HCT116 (cell line): ENCODE measurements at regions of chr5 and their contacts with region 1.

Region 1: GRCh38 chr5:179795863-179796833 is 2.4 kb downstream of the LTC4S start:
- DNase-seq: no peak
- ATAC-seq: peak; percentile 78
- H3K4me3 ChIP-seq: peak overlapping the region; percentile 65 to 84
- H3K27ac ChIP-seq: peak overlapping the region; percentile 99
- H3K4me1 ChIP-seq: peaks cover 9 to 22% of the 10 kb centered on the region in 2 experiments; a peak in 3 of 4 replicates
- H3K27me3 ChIP-seq: no peaks in the 10 kb centered on the region
- CTCF ChIP-seq: peak in 2 of 3 experiments; percentile 51 to 53; a peak in 4 of 6 replicates
- POLR2A ChIP-seq: peak; percentile 76
- RAD21 ChIP-seq: no peak

Region 2: DNA sequence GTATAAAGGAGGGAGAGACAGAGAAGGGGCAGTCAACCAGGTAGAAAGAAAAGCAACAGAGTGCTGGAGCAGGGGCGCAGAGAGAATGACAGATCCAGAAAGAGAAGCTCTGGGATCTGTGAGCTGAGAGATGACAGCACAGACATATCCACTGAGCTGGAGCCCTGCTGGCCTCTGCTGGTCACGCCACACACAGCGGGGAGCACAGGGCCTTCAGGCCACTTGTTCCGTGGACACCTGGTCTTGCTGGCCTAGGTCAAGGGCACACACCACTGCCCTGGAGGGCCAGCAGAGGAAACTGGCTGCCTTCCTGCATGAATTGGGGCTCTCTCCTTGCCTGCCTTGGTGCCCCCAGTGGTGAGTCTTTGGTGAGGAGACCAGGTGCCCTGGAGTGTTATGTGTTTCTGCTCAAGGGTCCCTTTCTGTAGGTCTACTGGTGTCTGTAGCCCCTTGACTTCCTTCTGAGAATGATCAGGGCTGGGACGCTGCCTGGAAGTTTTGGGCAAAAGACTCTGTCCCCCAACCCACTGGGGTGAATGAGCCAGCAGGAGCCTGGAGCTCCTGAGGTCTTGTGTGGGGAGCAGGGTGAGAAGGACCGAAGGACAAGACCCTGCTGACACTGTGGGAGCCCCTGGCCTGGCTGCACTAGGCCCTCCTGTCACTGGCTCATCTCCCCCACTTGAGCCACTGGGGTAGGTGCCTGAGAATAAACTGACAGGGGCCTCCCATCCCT is 391.7 kb before region 1 on chr5:
- CTCF ChIA-PET with region 1: no interaction called
- POLR2A ChIA-PET with region 1: no interaction called
- RAD21 ChIA-PET with region 1: no interaction called
- intact Hi-C with region 1: no loop called
- DNase-seq: no peak
- ATAC-seq: peak; percentile 72
- H3K4me3 ChIP-seq: no peak overlapping the region
- H3K27ac ChIP-seq: no peak overlapping the region
- H3K4me1 ChIP-seq: no peaks in the 10 kb centered on the region
- H3K27me3 ChIP-seq: no peaks in the 10 kb centered on the region
- CTCF ChIP-seq: peak; percentile 32 to 39 (median 39); a peak in 5 of 6 replicates
- POLR2A ChIP-seq: no peak
- RAD21 ChIP-seq: peak; percentile 66

Region 3: DNA sequence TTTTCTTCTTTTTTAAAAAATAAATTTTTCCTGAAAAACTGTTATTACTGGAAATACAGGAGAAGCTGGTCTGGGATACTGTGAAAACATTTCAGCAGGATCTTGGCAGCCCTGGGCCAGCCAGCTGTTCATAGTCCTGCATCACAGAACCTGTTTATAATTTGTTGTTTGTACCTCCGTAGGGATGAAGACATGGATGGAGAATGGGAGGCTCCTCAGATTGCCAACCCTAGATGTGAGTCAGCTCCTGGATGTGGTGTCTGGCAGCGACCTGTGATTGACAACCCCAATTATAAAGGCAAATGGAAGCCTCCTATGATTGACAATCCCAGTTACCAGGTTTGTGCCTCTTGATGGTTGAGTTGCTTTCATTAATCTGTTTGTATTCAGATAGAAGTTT is 75.9 kb before region 1 on chr5:
- CTCF ChIA-PET with region 1: no interaction called
- POLR2A ChIA-PET with region 1: no interaction called
- RAD21 ChIA-PET with region 1: no interaction called
- intact Hi-C with region 1: no loop called
- DNase-seq: no peak
- ATAC-seq: no peak
- H3K4me3 ChIP-seq: no peak overlapping the region
- H3K27ac ChIP-seq: no peak overlapping the region
- H3K4me1 ChIP-seq: no peaks in the 10 kb centered on the region
- H3K27me3 ChIP-seq: no peaks in the 10 kb centered on the region
- CTCF ChIP-seq: no peak
- POLR2A ChIP-seq: no peak
- RAD21 ChIP-seq: no peak

Region 4: DNA sequence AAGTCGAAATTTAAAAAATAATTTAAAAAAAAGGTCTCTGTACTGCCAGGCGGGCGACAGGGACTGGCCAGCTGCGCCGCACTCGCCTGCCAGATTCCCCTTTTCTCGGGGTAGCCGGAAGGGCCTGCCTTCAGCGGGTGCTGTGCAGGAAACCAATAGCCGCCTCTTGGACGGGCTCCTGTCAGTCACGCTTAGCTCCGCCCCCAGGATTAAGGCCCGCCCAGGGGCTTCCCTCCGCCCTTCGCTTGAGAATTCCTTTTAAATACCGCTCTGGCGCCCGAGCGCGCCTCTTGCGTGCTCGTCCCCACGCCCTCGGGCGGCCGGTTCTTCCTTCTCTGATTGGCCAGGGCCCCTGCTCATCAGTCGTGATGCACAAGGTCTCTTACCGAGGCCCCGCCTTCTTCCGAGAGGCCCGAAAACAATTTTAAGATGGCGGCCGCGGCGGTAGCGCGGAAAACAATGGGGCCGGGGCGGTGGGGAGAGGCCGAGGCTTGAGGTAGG is 63.7 kb before region 1 on chr5 and contains the start of gene MAML1:
- CTCF ChIA-PET with region 1: interaction called, 3 read pairs
- POLR2A ChIA-PET with region 1: no interaction called
- RAD21 ChIA-PET with region 1: no interaction called
- intact Hi-C with region 1: loop called (anchors 2 kb)
- DNase-seq: peak; percentile 99
- ATAC-seq: peak; percentile 92
- H3K4me3 ChIP-seq: peak within 1 kb of the TSS; percentile 72 to 85
- H3K27ac ChIP-seq: peak within 1 kb of the TSS; percentile 93
- H3K4me1 ChIP-seq: peaks cover 5 to 30% of the 10 kb centered on the region in 2 experiments
- H3K27me3 ChIP-seq: no peaks in the 10 kb centered on the region
- CTCF ChIP-seq: no peak
- POLR2A ChIP-seq: peak; percentile 82
- RAD21 ChIP-seq: no peak
- total RNA-seq, gene MAML1: 29.5 TPM

Region 5: GRCh38 chr5:180689071-180689694 is 893.0 kb after region 1 on chr5:
- CTCF ChIA-PET with region 1: no interaction called
- POLR2A ChIA-PET with region 1: no interaction called
- RAD21 ChIA-PET with region 1: no interaction called
- intact Hi-C with region 1: no loop called
- DNase-seq: no peak
- ATAC-seq: no peak
- H3K4me3 ChIP-seq: no peak overlapping the region
- H3K27ac ChIP-seq: no peak overlapping the region
- H3K4me1 ChIP-seq: no peaks in the 10 kb centered on the region
- H3K27me3 ChIP-seq: peaks cover 15% of the 10 kb centered on the region; the same call in 1 of the 2 replicates
- CTCF ChIP-seq: no peak
- POLR2A ChIP-seq: no peak
- RAD21 ChIP-seq: no peak